Caco-2 (cell line): ENCODE measurements at regions of chr6 and their contacts with region 1.

Region 1: DNA sequence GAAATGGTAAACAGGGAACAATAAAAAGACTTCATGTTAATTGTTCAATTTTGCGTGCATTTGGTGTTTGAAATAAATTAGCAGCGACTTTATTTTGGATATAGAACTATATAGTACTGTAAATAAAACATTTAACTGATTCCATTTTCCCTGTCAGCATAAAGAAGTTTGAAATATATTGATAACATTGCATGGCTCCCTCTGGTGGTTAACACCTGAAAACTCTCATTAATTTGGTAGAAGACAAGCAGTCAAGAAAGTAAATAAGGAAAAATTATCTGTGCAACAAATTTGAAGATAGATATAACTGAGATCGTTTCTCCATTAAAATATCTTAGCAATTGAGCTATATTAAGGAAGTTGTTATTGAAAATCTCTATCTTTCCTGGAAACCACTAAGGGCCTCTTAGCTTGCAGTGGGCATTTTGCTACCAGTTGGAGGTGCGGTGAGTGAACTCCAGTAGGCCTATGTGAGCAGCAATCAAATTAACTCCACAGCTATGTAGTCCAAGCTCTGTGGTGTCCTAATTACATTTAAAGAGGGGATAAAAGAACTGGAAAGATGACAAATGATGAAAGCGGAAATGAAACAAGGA is 435.7 kb upstream of the FKBP1C start:
- DNase-seq: peak in 1 of 2 experiments; percentile 17
- H3K4me3 ChIP-seq: no peak overlapping the region
- H3K4me3 Mint-ChIP-seq: no peak overlapping the region
- H3K27ac Mint-ChIP-seq: no peak overlapping the region
- H3K4me1 ChIP-seq: no peaks in the 10 kb centered on the region
- H3K4me1 Mint-ChIP-seq: no peaks in the 10 kb centered on the region
- H3K27me3 ChIP-seq: no peaks in the 10 kb centered on the region
- H3K27me3 Mint-ChIP-seq: no peaks in the 10 kb centered on the region
- CTCF ChIP-seq: peak; percentile 47 to 53

Region 2: GRCh38 chr6:62479697-62480220 is 295.8 kb before region 1 on chr6:
- CTCF ChIA-PET with region 1: no interaction called
- POLR2A ChIA-PET with region 1: no interaction called
- intact Hi-C with region 1: loop called (anchors 2 kb)
- DNase-seq: no peak
- H3K4me3 ChIP-seq: no peak overlapping the region
- H3K4me3 Mint-ChIP-seq: no peak overlapping the region
- H3K27ac Mint-ChIP-seq: no peak overlapping the region
- H3K4me1 ChIP-seq: no peaks in the 10 kb centered on the region
- H3K4me1 Mint-ChIP-seq: no peaks in the 10 kb centered on the region
- H3K27me3 ChIP-seq: no peaks in the 10 kb centered on the region
- H3K27me3 Mint-ChIP-seq: no peaks in the 10 kb centered on the region
- CTCF ChIP-seq: no peak

Region 3: GRCh38 chr6:62746968-62747367 is 28.6 kb before region 1 on chr6:
- CTCF ChIA-PET with region 1: no interaction called
- POLR2A ChIA-PET with region 1: no interaction called
- intact Hi-C with region 1: loop called (anchors 2 kb)
- DNase-seq: no peak
- H3K4me3 ChIP-seq: no peak overlapping the region
- H3K4me3 Mint-ChIP-seq: no peak overlapping the region
- H3K27ac Mint-ChIP-seq: no peak overlapping the region
- H3K4me1 ChIP-seq: no peaks in the 10 kb centered on the region
- H3K4me1 Mint-ChIP-seq: no peaks in the 10 kb centered on the region
- H3K27me3 ChIP-seq: no peaks in the 10 kb centered on the region
- H3K27me3 Mint-ChIP-seq: no peaks in the 10 kb centered on the region
- CTCF ChIP-seq: no peak